HEK293 (cell line): ENCODE measurements at regions of chr17 and their contacts with region 1.

Region 1: DNA sequence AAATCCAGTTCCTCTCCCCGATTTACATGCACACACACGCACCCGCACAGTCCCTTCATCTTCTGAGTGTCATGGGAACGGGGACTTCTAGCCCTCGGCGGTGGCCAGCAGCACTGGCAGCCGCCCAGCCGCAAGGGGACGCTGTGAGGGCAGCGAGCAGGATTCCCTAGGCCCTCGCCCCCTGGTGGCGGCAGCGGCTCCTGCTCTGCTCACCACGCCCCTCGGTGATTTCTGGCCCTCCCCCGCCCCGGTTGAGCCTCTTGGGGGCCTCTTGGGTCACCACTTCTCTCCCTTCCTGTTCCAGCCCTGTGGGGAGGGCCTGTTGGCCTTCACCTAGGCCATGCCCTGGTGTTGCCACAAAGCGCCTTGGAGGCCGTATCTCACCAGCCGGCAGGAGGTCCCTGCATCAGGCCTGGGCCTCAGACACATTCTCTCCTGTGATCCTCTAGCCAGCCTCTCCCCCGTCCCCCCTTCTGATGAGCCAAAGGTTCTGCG is 75.2 kb upstream of the KSR1 start:
- H3K4me3 ChIP-seq: no peak overlapping the region
- H3K27ac ChIP-seq: no peak overlapping the region
- H3K4me1 ChIP-seq: no peaks in the 10 kb centered on the region
- CTCF ChIP-seq: peak; percentile 61

Region 2: GRCh38 chr17:27353461-27354050 is 27.5 kb before region 1 on chr17:
- CTCF ChIA-PET with region 1: interaction called, 26 read pairs
- POLR2A ChIA-PET with region 1: no interaction called
- H3K4me3 ChIP-seq: peak overlapping the region; percentile 79
- H3K27ac ChIP-seq: peak overlapping the region; percentile 85
- H3K4me1 ChIP-seq: no peaks in the 10 kb centered on the region; the same call in 1 of the 2 replicates
- CTCF ChIP-seq: 0 out of 2 replicates have a peak, but pooled peaks have one; percentile 9

Region 3: DNA sequence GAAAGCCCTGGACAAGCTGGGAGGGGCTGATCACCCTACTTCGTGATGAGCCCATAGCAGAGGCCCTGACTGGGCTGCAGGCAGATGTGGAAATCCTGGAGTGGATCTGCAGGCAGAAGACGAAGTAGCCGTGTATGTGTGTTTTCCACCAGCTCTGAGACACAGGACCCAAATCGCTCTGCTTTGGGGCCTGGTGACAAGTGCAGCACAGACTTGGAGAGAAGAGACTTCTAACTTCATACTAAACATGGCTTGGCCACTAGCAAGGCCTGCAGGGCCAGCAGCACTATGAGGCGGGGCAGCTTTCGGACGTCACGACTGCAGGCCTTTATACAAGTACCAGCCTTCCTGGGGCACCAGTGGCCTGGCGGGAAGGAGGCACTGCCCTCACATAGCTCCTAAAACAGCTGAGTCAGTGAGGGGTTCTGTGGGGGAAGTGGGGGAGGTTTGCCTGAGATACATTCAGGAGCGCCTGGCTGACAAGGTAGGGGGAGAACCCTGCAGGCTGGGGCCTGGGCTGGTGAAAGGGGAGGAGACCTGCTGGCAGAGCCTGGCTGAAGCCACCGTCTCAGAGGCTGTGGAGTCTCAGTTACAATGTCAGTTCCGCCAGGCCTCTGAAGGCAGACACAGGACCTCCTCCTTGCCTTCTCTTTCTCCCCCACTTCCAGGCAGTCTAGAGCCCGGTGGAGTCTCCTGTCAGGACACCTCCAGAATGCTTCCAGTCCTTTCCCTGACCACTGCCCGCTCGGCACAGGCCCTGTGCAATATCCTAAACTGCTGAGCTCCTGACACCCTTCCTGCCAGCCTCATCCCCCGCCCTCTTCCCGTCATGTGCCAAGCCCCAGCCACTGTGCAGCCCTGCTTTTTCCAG is 13.7 kb before region 1 on chr17:
- CTCF ChIA-PET with region 1: interaction called, 24 read pairs
- POLR2A ChIA-PET with region 1: no interaction called
- H3K4me3 ChIP-seq: no peak overlapping the region
- H3K27ac ChIP-seq: no peak overlapping the region
- H3K4me1 ChIP-seq: no peaks in the 10 kb centered on the region
- CTCF ChIP-seq: no peak

Region 4: GRCh38 chr17:27407916-27408846 is 27.1 kb after region 1 on chr17:
- CTCF ChIA-PET with region 1: interaction called, 17 read pairs
- POLR2A ChIA-PET with region 1: no interaction called
- H3K4me3 ChIP-seq: no peak overlapping the region
- H3K27ac ChIP-seq: no peak overlapping the region
- H3K4me1 ChIP-seq: no peaks in the 10 kb centered on the region
- CTCF ChIP-seq: no peak

Region 5: GRCh38 chr17:27430882-27431491 is 49.9 kb after region 1 on chr17:
- CTCF ChIA-PET with region 1: interaction called, 15 read pairs
- POLR2A ChIA-PET with region 1: no interaction called
- H3K4me3 ChIP-seq: no peak overlapping the region
- H3K27ac ChIP-seq: no peak overlapping the region
- H3K4me1 ChIP-seq: no peaks in the 10 kb centered on the region
- CTCF ChIP-seq: peak; percentile 56

Region 6: GRCh38 chr17:27499446-27500260 is 118.6 kb after region 1 on chr17:
- CTCF ChIA-PET with region 1: no interaction called
- POLR2A ChIA-PET with region 1: no interaction called
- H3K4me3 ChIP-seq: no peak overlapping the region
- H3K27ac ChIP-seq: no peak overlapping the region
- H3K4me1 ChIP-seq: peaks cover under 1% of the 10 kb centered on the region; the same call in 1 of the 2 replicates
- CTCF ChIP-seq: no peak